HepG2 (cell line): ENCODE measurements at regions of chr20 and their contacts with region 1.

Region 1: GRCh38 chr20:50744143-50744792 is 12.9 kb downstream of the PARD6B start:
- DNase-seq: peak; percentile 96
- ATAC-seq: peak; percentile 93
- H3K4me3 ChIP-seq: peak overlapping the region in 2 of 3 experiments; percentile 7 to 39; a peak in 4 of 6 replicates
- H3K27ac ChIP-seq: peak overlapping the region; percentile 81
- H3K4me1 ChIP-seq: peaks cover 92% of the 10 kb centered on the region
- H3K27me3 ChIP-seq: no peaks in the 10 kb centered on the region
- CTCF ChIP-seq: peak; percentile 81
- EP300 ChIP-seq: peak; percentile 82 to 90
- POLR2A ChIP-seq: peak; percentile 39 to 67; a peak in 3 of 4 replicates
- RAD21 ChIP-seq: peak; percentile 66

Region 2: GRCh38 chr20:50575847-50576720 is 168.2 kb before region 1 on chr20:
- CTCF ChIA-PET with region 1: no interaction called
- POLR2A ChIA-PET with region 1: no interaction called
- in situ Hi-C with region 1: no loop called
- intact Hi-C with region 1: no loop called
- DNase-seq: peak; percentile 63
- ATAC-seq: peak; percentile 91
- H3K4me3 ChIP-seq: no peak overlapping the region
- H3K27ac ChIP-seq: no peak overlapping the region
- H3K4me1 ChIP-seq: peaks cover 8% of the 10 kb centered on the region
- H3K27me3 ChIP-seq: no peaks in the 10 kb centered on the region
- CTCF ChIP-seq: peak; percentile 93
- EP300 ChIP-seq: no peak
- POLR2A ChIP-seq: no peak
- RAD21 ChIP-seq: peak; percentile 88

Region 3: GRCh38 chr20:50625986-50626677 is 118.1 kb before region 1 on chr20:
- CTCF ChIA-PET with region 1: interaction called, 7 read pairs
- POLR2A ChIA-PET with region 1: interaction called, 6 read pairs
- in situ Hi-C with region 1: loop called (anchors 25 kb)
- intact Hi-C with region 1: loop called (anchors 1 kb)
- DNase-seq: peak; percentile 75
- ATAC-seq: peak; percentile 59
- H3K4me3 ChIP-seq: peak overlapping the region in 1 of 3 experiments; percentile 38; a peak in 1 of 6 replicates
- H3K27ac ChIP-seq: no peak overlapping the region
- H3K4me1 ChIP-seq: peaks cover 50% of the 10 kb centered on the region
- H3K27me3 ChIP-seq: peaks cover 2 to 34% of the 10 kb centered on the region in 2 experiments
- CTCF ChIP-seq: peak; percentile 99
- EP300 ChIP-seq: no peak
- POLR2A ChIP-seq: no peak
- RAD21 ChIP-seq: peak; percentile 88; the same call in 1 of the 2 replicates

Region 4: DNA sequence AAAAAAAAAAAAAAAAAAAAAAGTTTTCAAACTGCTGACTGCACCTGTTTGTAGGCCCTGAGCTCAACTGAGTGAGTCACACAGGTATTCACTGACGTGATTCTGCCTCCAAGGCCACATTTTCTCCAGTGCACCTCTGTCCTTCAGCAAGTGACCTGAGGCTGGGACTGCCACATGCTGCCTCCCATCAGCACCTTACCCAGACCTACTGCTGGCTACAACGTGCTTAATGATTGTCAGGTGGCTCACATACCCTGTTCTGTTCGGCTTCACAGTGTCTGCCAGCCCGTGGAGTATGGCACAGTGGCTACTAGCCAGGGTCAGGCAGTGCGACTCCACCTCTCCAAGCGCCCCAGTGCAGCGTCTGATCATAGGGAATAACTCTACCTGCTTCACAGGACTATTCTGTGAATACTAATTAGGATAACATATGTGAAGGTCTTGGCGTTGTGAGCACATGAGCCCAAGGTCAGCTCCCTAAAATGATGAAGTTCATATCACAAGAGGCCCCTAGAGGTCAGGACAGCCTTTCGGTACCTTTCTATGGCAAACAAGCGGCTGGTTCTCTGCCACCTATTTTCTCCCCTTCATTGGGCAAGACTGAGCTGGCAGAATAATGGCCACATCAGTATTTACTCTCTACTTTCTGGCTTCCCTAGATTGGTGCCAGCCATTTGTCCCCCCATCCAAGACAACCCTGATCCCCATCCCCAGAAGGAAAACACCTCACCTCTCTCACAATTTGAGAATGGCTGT is 81.0 kb before region 1 on chr20:
- CTCF ChIA-PET with region 1: interaction called, 11 read pairs
- POLR2A ChIA-PET with region 1: interaction called, 12 read pairs
- in situ Hi-C with region 1: no loop called
- intact Hi-C with region 1: loop called (anchors 1 kb)
- DNase-seq: peak; percentile 84
- ATAC-seq: peak; percentile 74
- H3K4me3 ChIP-seq: peak overlapping the region in 1 of 3 experiments; percentile 55; a peak in 2 of 6 replicates
- H3K27ac ChIP-seq: no peak overlapping the region
- H3K4me1 ChIP-seq: peaks cover 88% of the 10 kb centered on the region
- H3K27me3 ChIP-seq: peaks cover 2 to 14% of the 10 kb centered on the region in 2 experiments; a peak in 1 of 5 replicates
- CTCF ChIP-seq: peak; percentile 83
- EP300 ChIP-seq: no peak
- POLR2A ChIP-seq: no peak
- RAD21 ChIP-seq: peak; percentile 87

Region 5: GRCh38 chr20:50675651-50676376 is 68.5 kb before region 1 on chr20:
- CTCF ChIA-PET with region 1: no interaction called
- POLR2A ChIA-PET with region 1: interaction called, 4 read pairs
- in situ Hi-C with region 1: no loop called
- intact Hi-C with region 1: loop called (anchors 5 kb)
- DNase-seq: peak; percentile 93
- ATAC-seq: peak; percentile 52
- H3K4me3 ChIP-seq: peak overlapping the region in 1 of 3 experiments; percentile 26; a peak in 2 of 6 replicates
- H3K27ac ChIP-seq: peak overlapping the region; percentile 26
- H3K4me1 ChIP-seq: peaks cover 91% of the 10 kb centered on the region
- H3K27me3 ChIP-seq: no peaks in the 10 kb centered on the region
- CTCF ChIP-seq: no peak
- EP300 ChIP-seq: peak; percentile 55 to 86; a peak in 3 of 4 replicates
- POLR2A ChIP-seq: no peak
- RAD21 ChIP-seq: no peak

Region 6: DNA sequence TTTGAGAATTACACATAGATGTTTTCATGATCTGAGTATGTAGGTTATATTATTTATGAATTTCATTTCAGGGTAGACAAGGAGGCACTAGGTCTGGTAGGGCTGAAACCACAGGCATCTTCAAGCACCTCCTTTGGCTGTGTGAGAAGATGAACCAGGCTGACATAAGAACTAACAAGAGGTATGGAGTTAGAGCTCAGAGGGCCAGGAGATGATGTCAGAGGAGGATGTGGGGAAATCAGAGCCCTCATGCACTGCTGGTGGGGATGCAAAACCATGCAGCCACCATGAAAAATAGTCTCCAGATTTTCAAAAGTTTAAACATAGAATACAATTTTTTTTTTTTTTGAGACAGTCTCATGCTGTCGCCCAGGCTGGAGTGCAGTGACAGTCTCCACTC is 39.3 kb before region 1 on chr20:
- CTCF ChIA-PET with region 1: no interaction called
- POLR2A ChIA-PET with region 1: no interaction called
- in situ Hi-C with region 1: no loop called
- intact Hi-C with region 1: no loop called
- DNase-seq: no peak
- ATAC-seq: no peak
- H3K4me3 ChIP-seq: no peak overlapping the region
- H3K27ac ChIP-seq: no peak overlapping the region
- H3K4me1 ChIP-seq: peaks cover 33% of the 10 kb centered on the region
- H3K27me3 ChIP-seq: peaks cover 8 to 21% of the 10 kb centered on the region in 2 experiments; a peak in 4 of 5 replicates
- CTCF ChIP-seq: no peak
- EP300 ChIP-seq: no peak
- POLR2A ChIP-seq: no peak
- RAD21 ChIP-seq: no peak

Region 7: DNA sequence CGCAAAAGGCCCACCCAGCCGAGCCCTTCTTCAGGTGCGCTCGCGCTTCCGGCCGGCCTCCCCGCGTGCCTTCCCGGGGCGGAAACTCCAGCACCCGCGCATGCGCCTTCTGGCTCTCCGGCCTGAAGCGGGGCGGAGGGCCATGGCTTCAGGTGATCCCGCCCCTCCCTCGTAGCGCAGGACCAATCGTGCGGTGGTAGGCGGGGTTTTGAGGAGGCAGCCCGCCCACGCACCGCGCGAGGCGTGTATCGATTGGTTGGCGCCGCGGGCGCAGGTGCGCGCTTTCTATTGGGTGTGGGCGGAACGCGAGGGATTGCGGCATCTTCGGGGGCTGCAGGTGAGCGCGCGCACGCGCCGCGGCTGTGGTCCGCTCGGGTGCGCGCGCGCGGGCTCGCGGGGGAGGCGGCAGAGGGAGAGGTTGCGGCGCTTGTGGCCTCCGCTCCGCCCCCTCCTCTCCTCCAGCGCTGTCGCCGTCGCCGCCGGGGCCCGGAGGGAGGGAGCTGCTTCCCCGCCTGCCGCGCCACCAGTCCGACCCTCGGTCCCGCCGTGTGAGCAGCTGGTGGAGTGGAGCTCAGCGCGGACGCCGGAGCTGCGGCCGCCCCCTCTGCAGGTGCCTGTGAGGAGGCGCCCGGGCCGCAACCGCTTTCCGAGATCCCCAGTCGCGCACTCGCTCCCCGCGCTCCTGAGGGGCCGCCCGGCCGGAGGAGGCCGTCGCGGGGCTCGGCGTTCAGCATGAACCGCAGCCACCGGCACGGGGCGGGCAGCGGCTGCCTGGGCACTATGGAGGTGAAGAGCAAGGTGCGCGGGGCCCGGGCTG is 13.0 kb before region 1 on chr20 and contains the start of gene PARD6B:
- CTCF ChIA-PET with region 1: interaction called, 4 read pairs
- POLR2A ChIA-PET with region 1: interaction called, 65 read pairs
- in situ Hi-C with region 1: no loop called
- intact Hi-C with region 1: loop called (anchors 2 kb)
- DNase-seq: peak; percentile 99
- ATAC-seq: peak; percentile 80
- H3K4me3 ChIP-seq: peak within 1 kb of the TSS; percentile 88 to 96 (median 95)
- H3K27ac ChIP-seq: peak within 1 kb of the TSS; percentile 89
- H3K4me1 ChIP-seq: peaks cover 81% of the 10 kb centered on the region
- H3K27me3 ChIP-seq: no peaks in the 10 kb centered on the region; a peak in 1 of 5 replicates
- CTCF ChIP-seq: peak; percentile 46
- EP300 ChIP-seq: peak in 1 of 2 experiments; percentile 20; a peak in 1 of 4 replicates
- POLR2A ChIP-seq: peak; percentile 93 to 97
- RAD21 ChIP-seq: peak; percentile 85
- total RNA-seq, gene PARD6B: 22.2 and 26.6 TPM in 2 replicates

Region 8: GRCh38 chr20:50762435-50763201 is 18.4 kb after region 1 on chr20:
- CTCF ChIA-PET with region 1: no interaction called
- POLR2A ChIA-PET with region 1: interaction called, 15 read pairs
- in situ Hi-C with region 1: no loop called
- intact Hi-C with region 1: no loop called
- DNase-seq: peak; percentile 34
- ATAC-seq: no peak
- H3K4me3 ChIP-seq: no peak overlapping the region
- H3K27ac ChIP-seq: peak overlapping the region; percentile 66
- H3K4me1 ChIP-seq: peaks cover 73% of the 10 kb centered on the region
- H3K27me3 ChIP-seq: no peaks in the 10 kb centered on the region
- CTCF ChIP-seq: no peak
- EP300 ChIP-seq: no peak
- POLR2A ChIP-seq: no peak
- RAD21 ChIP-seq: no peak